T-cell (primary cell): ENCODE measurements at regions of chr7 and their contacts with region 1.

Region 1: DNA sequence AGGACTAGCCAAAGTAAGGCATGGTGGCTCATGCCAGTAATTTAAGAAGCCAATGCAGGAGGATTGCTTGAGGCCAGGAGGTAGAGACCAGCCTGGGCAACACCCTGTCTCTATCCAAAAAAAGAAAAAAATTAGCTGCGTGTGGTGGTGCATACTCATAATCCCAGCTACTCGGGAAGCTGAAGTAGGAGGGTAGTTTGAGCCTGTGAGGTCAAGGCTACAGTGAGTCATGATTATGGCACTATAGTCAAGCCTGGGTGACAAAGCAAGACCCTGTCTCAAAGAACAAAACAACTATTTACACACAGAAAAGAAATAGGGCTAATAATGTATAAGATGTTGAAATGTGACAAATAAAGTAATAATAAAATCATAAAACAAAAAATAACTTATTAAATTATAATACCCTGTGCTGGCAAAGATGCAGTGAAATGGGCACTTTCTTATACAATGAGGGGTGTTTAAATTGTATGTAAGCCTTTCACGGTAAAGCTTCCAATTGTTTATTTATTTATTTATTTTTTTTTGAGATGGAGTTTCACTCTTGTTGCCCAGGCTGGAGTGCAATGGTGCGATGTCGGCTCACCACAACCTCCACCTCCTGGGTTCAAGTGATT is 175.2 kb downstream of the TPST1 start:
- DNase-seq: no peak
- ATAC-seq: no peak
- H3K4me3 ChIP-seq: no peak overlapping the region
- H3K4me3 Mint-ChIP-seq: no peak overlapping the region
- H3K27ac ChIP-seq: no peak overlapping the region
- H3K27ac Mint-ChIP-seq: no peak overlapping the region
- H3K4me1 ChIP-seq: no peaks in the 10 kb centered on the region
- H3K4me1 Mint-ChIP-seq: peaks cover 0 to 3% (median 1%) of the 10 kb centered on the region in 3 donors
- H3K27me3 ChIP-seq: no peaks in the 10 kb centered on the region
- H3K27me3 Mint-ChIP-seq: no peaks in the 10 kb centered on the region

Region 2: DNA sequence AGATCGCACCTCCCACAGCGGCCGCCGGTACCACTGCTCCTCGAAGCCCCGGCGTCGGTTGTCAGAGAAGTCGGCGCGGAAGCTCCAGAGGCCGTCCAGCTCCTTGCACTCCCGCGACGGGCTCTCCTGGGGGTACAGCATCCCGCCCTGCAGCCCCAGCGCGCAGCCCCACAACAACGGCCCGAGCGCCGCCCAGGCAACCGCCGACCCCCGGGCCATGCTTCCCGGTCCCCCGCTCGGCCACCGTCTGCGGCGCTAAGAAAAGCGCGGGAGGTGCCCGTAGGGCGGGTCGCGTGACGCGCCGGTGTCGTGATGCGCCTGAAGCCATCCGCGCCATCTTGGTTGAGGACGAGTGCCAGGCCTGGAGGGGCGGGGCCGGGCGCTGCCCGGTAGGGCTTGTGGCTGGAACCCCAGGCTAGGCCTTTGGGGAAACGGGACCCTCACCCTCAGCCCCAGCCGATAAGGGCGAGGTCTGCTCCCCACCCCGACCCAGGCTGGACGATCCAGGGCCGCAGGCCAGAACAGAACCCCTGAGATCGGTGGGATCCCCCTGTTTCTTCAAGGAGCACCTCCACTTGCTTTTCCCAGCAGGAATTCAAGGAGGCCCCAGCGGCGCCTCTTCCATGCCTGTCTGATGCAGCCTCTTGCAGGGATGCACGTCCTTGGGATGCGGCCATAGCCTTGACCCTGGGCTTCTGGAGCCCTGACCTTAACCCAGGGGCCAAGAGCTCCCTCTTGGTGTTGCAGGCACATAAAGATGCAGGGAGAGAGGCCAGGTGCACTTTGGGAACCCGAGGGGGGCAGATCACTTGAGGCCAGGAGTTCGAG is 398.2 kb before region 1 on chr7 and contains the start of gene GUSB:
- CTCF ChIA-PET with region 1: no interaction called
- POLR2A ChIA-PET with region 1: interaction called in 1 of 2 experiments, 11 read pairs
- DNase-seq: peak; percentile 69 to 91 (median 85)
- ATAC-seq: peak; percentile 95 to 96 (median 95)
- H3K4me3 ChIP-seq: peak within 1 kb of the TSS; percentile 65 to 85
- H3K4me3 Mint-ChIP-seq: peak within 1 kb of the TSS; percentile 72 to 81 (median 76)
- H3K27ac ChIP-seq: peak within 1 kb of the TSS; percentile 74
- H3K27ac Mint-ChIP-seq: peak within 1 kb of the TSS in 1 of 2 donors; percentile 68
- H3K4me1 ChIP-seq: peaks cover 8 to 26% of the 10 kb centered on the region in 2 experiments
- H3K4me1 Mint-ChIP-seq: peaks cover 11 to 19% (median 14%) of the 10 kb centered on the region in 3 donors
- H3K27me3 ChIP-seq: no peaks in the 10 kb centered on the region
- H3K27me3 Mint-ChIP-seq: no peaks in the 10 kb centered on the region
- total RNA-seq, gene GUSB: 35.3 to 56.7 (median 52.3) TPM